HepG2 (cell line): ENCODE measurements at regions of chr1 and their contacts with region 1.

Region 1: GRCh38 chr1:246002725-246003441 is 504.2 kb downstream of the SMYD3 start:
- DNase-seq: peak; percentile 67
- ATAC-seq: peak; percentile 89
- H3K4me3 ChIP-seq: no peak overlapping the region
- H3K27ac ChIP-seq: no peak overlapping the region
- H3K4me1 ChIP-seq: no peaks in the 10 kb centered on the region
- H3K27me3 ChIP-seq: no peaks in the 10 kb centered on the region
- CTCF ChIP-seq: peak; percentile 91
- EP300 ChIP-seq: no peak
- POLR2A ChIP-seq: no peak
- RAD21 ChIP-seq: peak; percentile 85

Region 2: GRCh38 chr1:245079021-245079609 is 923.8 kb before region 1 on chr1:
- CTCF ChIA-PET with region 1: no interaction called
- POLR2A ChIA-PET with region 1: no interaction called
- in situ Hi-C with region 1: loop called (anchors 10 kb)
- intact Hi-C with region 1: loop called (anchors 5 kb)
- DNase-seq: peak; percentile 29
- ATAC-seq: no peak
- H3K4me3 ChIP-seq: no peak overlapping the region
- H3K27ac ChIP-seq: no peak overlapping the region
- H3K4me1 ChIP-seq: no peaks in the 10 kb centered on the region
- H3K27me3 ChIP-seq: no peaks in the 10 kb centered on the region
- CTCF ChIP-seq: peak; percentile 72
- EP300 ChIP-seq: no peak
- POLR2A ChIP-seq: no peak
- RAD21 ChIP-seq: peak; percentile 63

Region 3: GRCh38 chr1:245277276-245277675 is 725.6 kb before region 1 on chr1:
- CTCF ChIA-PET with region 1: no interaction called
- POLR2A ChIA-PET with region 1: no interaction called
- in situ Hi-C with region 1: no loop called
- intact Hi-C with region 1: loop called (anchors 5 kb)
- DNase-seq: peak; percentile 27
- ATAC-seq: peak; percentile 98
- H3K4me3 ChIP-seq: no peak overlapping the region
- H3K27ac ChIP-seq: no peak overlapping the region
- H3K4me1 ChIP-seq: peaks cover 10% of the 10 kb centered on the region; the same call in 1 of the 2 replicates
- H3K27me3 ChIP-seq: no peaks in the 10 kb centered on the region
- CTCF ChIP-seq: peak; percentile 77
- EP300 ChIP-seq: no peak
- POLR2A ChIP-seq: no peak
- RAD21 ChIP-seq: peak; percentile 43

Region 4: DNA sequence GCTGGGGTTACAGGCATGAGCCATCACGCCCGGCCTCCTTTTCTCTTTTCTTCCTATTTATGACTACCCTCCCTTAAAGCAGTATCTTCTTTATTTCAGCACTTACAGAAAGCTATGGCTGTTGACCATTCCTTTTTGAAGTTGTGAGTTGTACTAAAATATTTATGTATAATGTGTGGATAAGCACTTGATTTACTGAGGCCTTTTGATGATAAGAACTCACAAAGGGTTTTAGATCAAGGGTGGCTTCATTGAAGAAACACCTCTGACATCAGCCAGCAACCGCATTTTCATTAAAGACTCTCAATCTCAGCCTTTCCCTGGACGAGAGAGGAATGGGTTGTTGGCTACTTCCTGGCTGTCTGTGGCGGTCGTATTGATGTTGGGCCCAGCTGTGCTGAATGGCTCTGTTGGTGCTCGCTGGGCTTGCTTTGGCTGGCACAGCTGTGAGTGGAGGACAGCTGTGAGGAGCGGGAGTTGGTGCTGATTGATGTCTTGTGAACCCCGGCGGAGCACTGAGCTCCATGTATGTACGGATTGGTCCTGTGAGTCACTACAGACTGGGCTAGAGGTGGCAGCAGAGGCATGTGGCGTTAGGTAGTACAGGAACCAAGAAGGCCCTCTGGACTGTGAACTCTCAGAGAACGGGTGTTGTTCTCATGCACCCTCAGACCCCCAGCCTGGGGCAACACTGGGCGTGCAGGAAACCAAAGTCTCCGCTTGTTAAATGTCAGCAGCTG is 639.3 kb before region 1 on chr1:
- CTCF ChIA-PET with region 1: no interaction called
- POLR2A ChIA-PET with region 1: no interaction called
- in situ Hi-C with region 1: no loop called
- intact Hi-C with region 1: loop called (anchors 1 kb)
- DNase-seq: peak; percentile 42
- ATAC-seq: peak; percentile 100
- H3K4me3 ChIP-seq: peak overlapping the region in 1 of 3 experiments; percentile 42; a peak in 1 of 6 replicates
- H3K27ac ChIP-seq: no peak overlapping the region
- H3K4me1 ChIP-seq: peaks cover 19% of the 10 kb centered on the region; the same call in 1 of the 2 replicates
- H3K27me3 ChIP-seq: no peaks in the 10 kb centered on the region
- CTCF ChIP-seq: peak; percentile 90
- EP300 ChIP-seq: no peak
- POLR2A ChIP-seq: no peak
- RAD21 ChIP-seq: 0 out of 2 replicates have a peak, but pooled peaks have one; percentile 15

Region 5: GRCh38 chr1:245512980-245513578 is 489.8 kb before region 1 on chr1:
- CTCF ChIA-PET with region 1: interaction called, 15 read pairs
- POLR2A ChIA-PET with region 1: no interaction called
- in situ Hi-C with region 1: loop called (anchors 10 kb)
- intact Hi-C with region 1: loop called (anchors 1 kb)
- DNase-seq: no peak
- ATAC-seq: peak; percentile 71
- H3K4me3 ChIP-seq: no peak overlapping the region
- H3K27ac ChIP-seq: no peak overlapping the region
- H3K4me1 ChIP-seq: no peaks in the 10 kb centered on the region
- H3K27me3 ChIP-seq: peaks cover 0 to 9% of the 10 kb centered on the region in 2 experiments; a peak in 2 of 5 replicates
- CTCF ChIP-seq: no peak
- EP300 ChIP-seq: no peak
- POLR2A ChIP-seq: no peak
- RAD21 ChIP-seq: no peak

Region 6: GRCh38 chr1:245701631-245702030 is 301.3 kb before region 1 on chr1:
- CTCF ChIA-PET with region 1: no interaction called
- POLR2A ChIA-PET with region 1: no interaction called
- in situ Hi-C with region 1: no loop called
- intact Hi-C with region 1: loop called (anchors 1 kb)
- DNase-seq: no peak
- ATAC-seq: no peak
- H3K4me3 ChIP-seq: no peak overlapping the region
- H3K27ac ChIP-seq: no peak overlapping the region
- H3K4me1 ChIP-seq: peaks cover 7% of the 10 kb centered on the region; the same call in 1 of the 2 replicates
- H3K27me3 ChIP-seq: no peaks in the 10 kb centered on the region
- CTCF ChIP-seq: no peak
- EP300 ChIP-seq: no peak
- POLR2A ChIP-seq: no peak
- RAD21 ChIP-seq: no peak

Region 7: GRCh38 chr1:245888809-245889208 is 114.1 kb before region 1 on chr1:
- CTCF ChIA-PET with region 1: interaction called, 7 read pairs
- POLR2A ChIA-PET with region 1: no interaction called
- in situ Hi-C with region 1: no loop called
- intact Hi-C with region 1: loop called (anchors 1 kb)
- DNase-seq: peak; percentile 52
- ATAC-seq: peak; percentile 84
- H3K4me3 ChIP-seq: no peak overlapping the region
- H3K27ac ChIP-seq: no peak overlapping the region
- H3K4me1 ChIP-seq: no peaks in the 10 kb centered on the region
- H3K27me3 ChIP-seq: no peaks in the 10 kb centered on the region
- CTCF ChIP-seq: peak; percentile 53
- EP300 ChIP-seq: no peak
- POLR2A ChIP-seq: no peak
- RAD21 ChIP-seq: 0 out of 2 replicates have a peak, but pooled peaks have one; percentile 21

Region 8: GRCh38 chr1:246471688-246472087 is 468.8 kb after region 1 on chr1:
- CTCF ChIA-PET with region 1: no interaction called
- POLR2A ChIA-PET with region 1: no interaction called
- in situ Hi-C with region 1: no loop called
- intact Hi-C with region 1: no loop called
- DNase-seq: no peak
- ATAC-seq: no peak
- H3K4me3 ChIP-seq: no peak overlapping the region
- H3K27ac ChIP-seq: no peak overlapping the region
- H3K4me1 ChIP-seq: no peaks in the 10 kb centered on the region
- H3K27me3 ChIP-seq: no peaks in the 10 kb centered on the region
- CTCF ChIP-seq: no peak
- EP300 ChIP-seq: no peak
- POLR2A ChIP-seq: no peak
- RAD21 ChIP-seq: no peak